ENCODE measurements at regions of chr16 and their contacts with region 1.

Region 1: DNA sequence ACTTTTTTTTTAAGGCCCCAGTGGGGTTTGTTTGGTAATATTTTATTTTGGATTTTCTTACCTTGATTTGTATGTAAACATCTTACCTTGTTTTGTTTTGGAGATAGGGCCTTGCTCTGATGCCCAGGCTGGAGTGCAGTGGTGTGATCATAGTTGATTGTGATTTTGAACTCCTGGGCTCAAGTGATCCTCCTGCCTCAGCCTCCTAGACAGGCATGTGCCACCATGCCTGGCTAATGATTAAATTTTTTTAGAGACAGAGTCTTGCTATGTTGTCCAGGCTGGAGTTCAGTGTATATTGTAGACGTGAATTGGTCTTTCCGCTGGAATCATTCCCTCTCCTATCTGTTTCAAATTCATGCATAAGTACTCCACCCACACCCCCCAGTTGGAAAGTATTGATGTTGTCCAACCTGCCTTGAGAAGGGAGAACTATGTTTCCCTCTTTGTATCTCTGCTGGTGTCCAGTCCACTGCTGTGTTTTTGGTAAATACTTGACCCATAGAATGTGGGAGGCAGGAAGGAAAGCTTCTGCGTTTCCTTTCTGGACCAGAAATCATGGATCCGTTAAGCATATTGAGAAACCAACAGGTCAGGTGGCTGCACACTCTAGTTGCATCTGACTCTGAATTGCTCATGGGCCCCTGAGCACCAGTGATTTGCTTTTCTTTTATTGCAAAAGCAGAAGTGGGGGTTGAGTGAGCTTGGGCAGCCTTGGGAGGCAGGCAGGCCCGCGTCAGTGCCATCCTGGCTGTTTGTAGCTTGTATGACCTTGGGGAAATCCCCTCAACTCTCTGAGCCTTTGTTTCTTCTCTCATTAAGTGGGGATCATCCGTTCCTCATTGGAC is 25.0 kb downstream of the RMI2 start:
- DNase-seq: no peak
- ATAC-seq: no peak
- H3K4me3 ChIP-seq: no peak overlapping the region
- H3K27ac ChIP-seq: no peak overlapping the region
- H3K4me1 ChIP-seq: peaks cover 0 to 5% of the 10 kb centered on the region in 2 experiments; a peak in 2 of 4 replicates
- H3K27me3 ChIP-seq: no peaks in the 10 kb centered on the region
- CTCF ChIP-seq: no peak
- POLR2A ChIP-seq: no peak
- RAD21 ChIP-seq: no peak

Region 2: DNA sequence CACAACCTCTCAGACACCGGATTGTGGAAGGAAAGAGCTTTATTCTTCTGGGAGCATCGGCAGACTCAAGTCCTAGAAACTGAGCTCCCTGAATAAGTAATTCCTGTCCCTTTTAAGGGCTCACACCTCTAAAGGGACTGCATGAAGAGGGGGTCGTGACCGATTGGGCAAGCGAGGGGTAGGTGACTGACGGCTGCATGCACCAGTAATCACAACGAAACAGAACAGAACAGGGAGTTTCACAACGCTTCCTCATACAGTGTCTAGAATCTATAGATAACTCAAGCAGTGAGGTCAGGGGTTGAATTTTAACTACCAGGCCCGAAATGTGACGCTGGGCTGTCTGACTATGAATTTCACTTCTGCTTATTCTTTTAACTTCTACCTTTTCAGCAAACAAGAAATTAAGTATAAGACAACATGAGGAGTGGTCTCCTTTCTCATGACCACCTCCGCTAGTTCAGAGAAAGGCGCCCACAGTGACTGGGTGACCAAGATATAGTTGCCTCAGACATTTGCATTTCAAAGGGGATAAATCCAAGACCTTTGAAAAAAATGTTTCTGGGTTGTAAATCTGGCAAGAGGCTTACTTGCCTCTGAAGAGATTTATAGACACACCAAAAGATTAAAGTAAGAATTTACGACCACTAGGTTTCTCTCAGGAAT is 1072.8 kb before region 1 on chr16:
- CTCF ChIA-PET with region 1: no interaction called
- POLR2A ChIA-PET with region 1: no interaction called
- RAD21 ChIA-PET with region 1: no interaction called
- intact Hi-C with region 1: no loop called
- DNase-seq: no peak
- ATAC-seq: no peak
- H3K4me3 ChIP-seq: no peak overlapping the region
- H3K27ac ChIP-seq: no peak overlapping the region
- H3K4me1 ChIP-seq: no peaks in the 10 kb centered on the region
- H3K27me3 ChIP-seq: no peaks in the 10 kb centered on the region
- CTCF ChIP-seq: no peak
- POLR2A ChIP-seq: no peak
- RAD21 ChIP-seq: no peak

Region 3: DNA sequence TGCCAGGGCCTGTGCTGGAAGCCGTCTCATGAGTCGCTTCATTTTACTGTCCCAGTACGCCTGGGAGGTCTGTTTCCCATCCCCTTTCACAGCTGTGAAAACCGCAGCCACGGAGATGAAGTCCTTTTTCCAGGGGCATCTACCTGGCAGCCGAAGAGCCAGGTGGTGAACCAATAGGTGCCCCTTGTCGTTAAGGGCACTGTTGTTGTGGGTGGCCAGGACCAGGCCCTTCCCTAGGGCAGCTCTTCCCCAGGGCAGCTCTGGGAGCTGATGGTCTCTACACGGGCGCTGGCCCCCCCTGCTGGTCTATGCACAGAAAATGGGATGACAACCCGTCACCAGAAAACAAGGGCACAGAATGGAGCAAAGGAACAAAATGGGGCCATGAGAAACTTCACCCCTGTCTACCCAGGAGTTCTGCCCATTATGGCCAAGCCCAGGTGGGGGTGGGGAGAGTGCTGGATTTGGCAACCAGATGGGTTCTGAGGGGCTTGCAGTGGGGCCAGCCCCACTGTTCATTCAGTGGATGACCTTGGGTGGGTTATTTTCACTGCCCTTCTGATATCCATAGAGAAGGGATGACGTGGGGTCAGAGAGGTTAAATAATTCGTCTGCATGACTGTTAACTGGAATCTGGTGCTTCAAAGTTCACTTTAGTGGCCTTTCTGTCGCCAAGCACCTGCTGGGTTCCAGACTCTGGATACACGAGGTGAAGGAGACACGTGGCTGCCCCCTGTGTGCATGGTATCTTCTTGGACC is 13.6 kb before region 1 on chr16:
- CTCF ChIA-PET with region 1: interaction called, 26 read pairs
- POLR2A ChIA-PET with region 1: interaction called, 6 read pairs
- RAD21 ChIA-PET with region 1: interaction called in 1 of 2 experiments, 3 read pairs
- intact Hi-C with region 1: no loop called
- DNase-seq: no peak
- ATAC-seq: peak; percentile 72
- H3K4me3 ChIP-seq: peak overlapping the region in 1 of 2 experiments; percentile 37; a peak in 2 of 4 replicates
- H3K27ac ChIP-seq: peak overlapping the region; percentile 59
- H3K4me1 ChIP-seq: peaks cover 34 to 46% of the 10 kb centered on the region in 2 experiments
- H3K27me3 ChIP-seq: no peaks in the 10 kb centered on the region
- CTCF ChIP-seq: peak; percentile 57 to 73 (median 68); a peak in 5 of 6 replicates
- POLR2A ChIP-seq: no peak
- RAD21 ChIP-seq: peak; percentile 85

Region 4: GRCh38 chr16:11386791-11387546 is 16.7 kb after region 1 on chr16:
- CTCF ChIA-PET with region 1: interaction called, 11 read pairs
- POLR2A ChIA-PET with region 1: no interaction called
- RAD21 ChIA-PET with region 1: no interaction called
- intact Hi-C with region 1: no loop called
- DNase-seq: no peak
- ATAC-seq: peak; percentile 96
- H3K4me3 ChIP-seq: no peak overlapping the region
- H3K27ac ChIP-seq: no peak overlapping the region
- H3K4me1 ChIP-seq: peaks cover 0 to 20% of the 10 kb centered on the region in 2 experiments; a peak in 1 of 4 replicates
- H3K27me3 ChIP-seq: no peaks in the 10 kb centered on the region
- CTCF ChIP-seq: peak; percentile 42 to 78 (median 67); a peak in 5 of 6 replicates
- POLR2A ChIP-seq: no peak
- RAD21 ChIP-seq: peak; percentile 59

Measured in HCT116 (cell line).